BJ (cell line): ENCODE measurements at regions of chr10 and their contacts with region 1.

Region 1: DNA sequence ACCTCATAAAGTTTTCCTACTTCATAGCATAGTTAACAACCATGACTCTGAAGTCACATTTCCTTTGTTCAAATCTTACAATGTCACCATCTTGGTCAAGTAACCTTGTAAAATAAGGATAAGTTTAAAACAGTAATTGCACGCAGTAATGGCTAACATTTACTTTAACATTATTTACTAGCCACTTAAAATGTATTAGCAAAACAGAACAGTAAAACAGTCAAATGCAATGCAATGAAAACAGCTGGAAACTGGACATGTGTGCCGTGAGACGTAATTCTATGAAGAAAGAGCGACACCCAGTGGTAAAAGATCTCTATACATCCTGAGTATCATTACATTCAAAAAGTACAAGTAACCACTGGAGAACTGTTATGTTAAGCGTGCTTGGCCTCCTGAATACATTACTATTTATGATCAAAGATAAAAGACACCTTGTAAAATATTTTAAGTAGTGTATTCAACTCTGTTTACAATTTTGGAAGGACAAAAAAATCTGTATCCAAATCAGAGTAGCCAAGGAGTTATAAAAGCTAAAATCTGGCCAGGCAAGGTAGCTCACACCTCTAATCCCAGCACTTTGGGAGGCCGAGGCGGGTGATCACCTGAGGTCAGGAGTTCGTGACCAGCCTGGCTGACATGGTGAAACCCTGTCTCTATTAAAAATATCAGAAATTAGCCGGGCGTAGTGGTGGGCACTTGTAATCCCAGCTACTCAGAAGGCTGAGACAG is 27.2 kb downstream of the ATE1 start:
- DNase-seq: no peak
- H3K4me3 ChIP-seq: no peak overlapping the region
- H3K27me3 ChIP-seq: no peaks in the 10 kb centered on the region
- CTCF ChIP-seq: peak; percentile 68

Region 2: GRCh38 chr10:120942806-120943413 is 957.7 kb before region 1 on chr10:
- CTCF ChIA-PET with region 1: interaction called, 16 read pairs
- POLR2A ChIA-PET with region 1: no interaction called
- DNase-seq: peak; percentile 3
- H3K4me3 ChIP-seq: no peak overlapping the region
- H3K27me3 ChIP-seq: no peaks in the 10 kb centered on the region
- CTCF ChIP-seq: peak; percentile 93

Region 3: GRCh38 chr10:120948889-120949608 is 951.6 kb before region 1 on chr10:
- CTCF ChIA-PET with region 1: interaction called, 16 read pairs
- POLR2A ChIA-PET with region 1: no interaction called
- DNase-seq: no peak
- H3K4me3 ChIP-seq: peak overlapping the region; percentile 40
- H3K27me3 ChIP-seq: peaks cover 11% of the 10 kb centered on the region
- CTCF ChIP-seq: peak; percentile 60

Region 4: GRCh38 chr10:121438333-121438732 is 462.3 kb before region 1 on chr10:
- CTCF ChIA-PET with region 1: no interaction called
- POLR2A ChIA-PET with region 1: no interaction called
- DNase-seq: no peak
- H3K4me3 ChIP-seq: no peak overlapping the region
- H3K27me3 ChIP-seq: no peaks in the 10 kb centered on the region
- CTCF ChIP-seq: no peak

Region 5: GRCh38 chr10:121886997-121887622 is 13.5 kb before region 1 on chr10:
- CTCF ChIA-PET with region 1: interaction called, 29 read pairs
- POLR2A ChIA-PET with region 1: no interaction called
- DNase-seq: no peak
- H3K4me3 ChIP-seq: no peak overlapping the region
- H3K27me3 ChIP-seq: no peaks in the 10 kb centered on the region
- CTCF ChIP-seq: peak; percentile 87

Region 6: DNA sequence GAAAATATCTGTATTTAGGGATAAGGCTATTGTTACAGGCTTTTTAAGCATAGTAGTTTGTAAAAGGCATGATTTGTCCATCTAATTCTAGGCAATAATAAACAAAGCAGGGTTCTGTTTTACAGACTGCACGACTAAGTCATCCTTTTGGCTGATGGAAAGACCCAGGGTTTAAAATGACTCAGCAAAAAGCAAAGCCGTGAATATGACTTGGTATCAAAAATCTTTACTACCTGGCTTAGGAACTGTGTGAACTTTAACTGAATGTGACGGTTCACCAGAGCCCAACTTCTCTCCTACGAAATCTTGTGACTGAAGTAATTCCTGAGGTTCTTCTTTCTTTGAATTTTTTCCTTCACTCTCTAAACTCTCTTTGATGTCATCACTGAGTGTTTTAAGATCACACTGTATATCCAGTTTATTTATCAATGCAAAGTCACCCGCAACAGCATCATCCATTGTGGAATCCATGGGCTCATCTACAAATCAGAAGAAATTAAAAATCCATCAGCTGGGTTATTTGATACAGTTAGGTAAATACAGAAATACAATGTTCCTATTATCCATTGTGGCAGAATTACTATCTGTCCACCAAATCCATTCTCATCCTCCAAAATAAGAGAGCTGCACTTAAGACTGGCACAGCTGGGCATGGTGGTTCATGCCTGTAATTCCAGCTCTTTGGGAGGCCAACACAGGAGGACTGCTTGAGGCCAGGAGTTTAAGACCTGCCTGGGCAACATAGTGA is 10.2 kb after region 1 on chr10:
- CTCF ChIA-PET with region 1: interaction called, 12 read pairs
- POLR2A ChIA-PET with region 1: no interaction called
- DNase-seq: no peak
- H3K4me3 ChIP-seq: no peak overlapping the region
- H3K27me3 ChIP-seq: no peaks in the 10 kb centered on the region
- CTCF ChIP-seq: no peak